ENCODE measurements at regions of chr5 and their contacts with region 1.

Region 1: GRCh38 chr5:127290019-127290945 is at the start of gene MEGF10:
- DNase-seq: no peak
- ATAC-seq: peak; percentile 65
- total RNA-seq, gene MEGF10: 0.43 TPM

Region 2: DNA sequence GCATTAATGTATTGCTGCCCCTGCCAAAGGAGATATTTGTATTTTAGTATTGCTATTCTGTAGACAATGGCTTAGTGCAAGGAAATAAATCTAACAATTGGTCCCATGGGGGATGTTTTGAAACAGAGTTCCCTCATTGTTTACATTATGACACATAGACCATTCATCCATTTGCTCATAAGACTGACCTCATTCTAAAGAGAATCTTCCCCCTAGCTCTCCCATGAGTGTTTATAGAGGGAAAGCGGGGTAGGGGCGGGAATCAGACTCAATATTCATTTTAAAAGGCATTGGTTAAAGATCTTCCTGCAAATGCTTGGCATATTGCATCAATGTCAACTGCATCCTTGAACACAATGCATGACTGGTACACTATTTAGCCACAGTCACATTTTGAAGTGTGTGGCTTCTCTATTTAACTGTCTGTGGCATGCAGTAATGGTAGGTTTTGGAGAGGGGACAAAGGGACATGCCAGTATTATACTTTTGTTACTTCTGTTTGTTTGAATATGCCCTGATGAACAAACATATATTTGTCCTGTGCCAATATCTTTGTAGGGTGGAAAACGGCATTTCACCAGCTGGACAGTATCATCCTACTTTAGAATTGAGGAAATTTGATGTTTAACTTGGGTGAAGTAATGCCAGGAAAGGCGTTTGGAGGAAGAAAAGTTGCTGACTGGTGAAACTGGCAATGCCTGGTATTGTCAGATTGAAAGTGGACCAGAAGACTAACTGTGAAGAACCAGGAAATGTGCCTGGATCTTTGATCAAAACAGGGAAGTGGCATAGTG is 83.8 kb before region 1 on chr5:
- intact Hi-C with region 1: no loop called
- DNase-seq: no peak
- ATAC-seq: no peak

Region 3: GRCh38 chr5:127441799-127442484 is 151.7 kb after region 1 on chr5:
- intact Hi-C with region 1: loop called (anchors 2 kb)
- DNase-seq: no peak
- ATAC-seq: no peak

Region 4: DNA sequence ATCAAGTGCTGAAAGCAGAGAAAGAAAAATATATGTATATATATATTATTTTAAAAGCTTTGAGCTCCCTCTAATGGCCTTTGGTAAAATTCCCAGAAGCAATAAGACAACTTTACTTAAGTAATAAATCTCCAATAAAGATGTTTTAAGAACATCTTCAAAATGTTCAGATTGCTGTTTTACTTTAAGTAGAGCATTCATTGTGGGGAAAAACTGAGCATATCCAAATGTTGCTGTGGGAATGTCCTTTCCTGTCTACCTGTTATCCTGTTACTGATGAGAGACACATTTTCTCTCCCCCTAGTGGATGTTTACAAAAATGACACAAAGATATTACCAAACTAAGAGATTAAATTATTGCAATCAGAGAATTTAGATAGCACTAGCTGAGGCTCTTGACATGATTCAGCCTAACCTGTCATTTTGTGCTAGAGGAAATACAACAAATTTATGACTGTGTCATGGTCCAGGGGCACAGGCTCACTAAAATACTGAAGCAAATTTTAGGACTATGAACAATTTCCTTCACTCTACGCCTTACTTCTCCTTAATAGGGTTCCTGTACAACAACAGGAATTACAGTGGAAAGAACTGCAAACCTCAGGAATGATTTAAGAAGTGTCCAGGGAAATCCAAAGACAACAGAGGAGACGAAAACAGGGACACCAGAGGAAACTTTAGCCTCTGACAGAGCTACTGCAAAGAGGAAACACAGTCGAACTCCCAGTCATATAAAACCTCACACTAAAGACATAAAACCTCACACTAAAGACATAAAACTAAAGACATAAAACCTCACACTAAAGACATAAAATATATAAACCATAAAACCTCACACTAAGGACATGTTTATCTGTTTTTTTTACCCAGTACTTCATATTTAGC is 202.8 kb after region 1 on chr5:
- intact Hi-C with region 1: loop called (anchors 1 kb)
- DNase-seq: no peak
- ATAC-seq: no peak